Sciatic nerve (tissue), 2 donors: ENCODE measurements at regions of chr9 and their contacts with region 1.

Region 1: GRCh38 chr9:95552814-95553546 is 36.2 kb upstream of the PTCH1 start:
- DNase-seq: peak; percentile 79
- ATAC-seq: peak; percentile 93

Region 2: DNA sequence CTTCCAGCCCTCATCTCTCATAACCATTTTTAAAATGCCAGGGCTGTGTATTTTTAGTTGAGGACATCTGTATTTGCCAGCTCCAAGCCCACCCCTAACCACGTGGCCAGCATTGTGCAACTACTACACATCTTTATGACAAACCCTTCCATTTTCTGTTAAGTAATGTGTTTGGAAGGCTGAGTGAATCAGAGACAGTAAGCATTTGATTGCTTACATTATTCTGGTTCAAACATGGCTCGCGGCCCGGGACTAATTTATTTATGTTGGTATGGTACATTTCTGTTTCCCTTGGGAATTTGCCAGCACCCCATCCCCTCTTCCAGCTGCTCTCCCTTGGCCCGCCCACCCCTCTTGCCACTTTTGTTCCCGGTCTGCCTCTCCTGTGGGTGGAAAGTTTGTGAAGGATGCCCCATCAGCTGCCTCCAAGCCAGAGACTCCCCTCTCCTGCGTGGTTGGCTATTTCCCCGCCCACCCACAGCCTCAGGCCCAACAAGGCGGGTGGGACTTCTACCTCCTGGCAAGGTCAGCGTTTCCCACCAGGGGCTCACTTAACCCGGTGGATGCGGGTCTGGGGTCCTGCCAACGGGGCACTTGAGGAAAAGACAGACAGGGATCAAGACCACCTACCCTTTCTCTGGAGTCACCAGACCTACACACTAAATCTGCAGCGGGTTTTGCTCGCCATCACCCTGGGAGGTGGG is 586.8 kb after region 1 on chr9:
- intact Hi-C with region 1: loop called (anchors 10 kb)
- DNase-seq: peak; percentile 74
- ATAC-seq: peak; percentile 88